Posterior vena cava (tissue), 2 donors: ENCODE measurements at regions of chr13 and their contacts with region 1.

Region 1: GRCh38 chr13:98509271-98510155 is 67.4 kb downstream of the STK24 start:
- DNase-seq: peak; percentile 92

Region 2: GRCh38 chr13:97858161-97858560 is 651.4 kb before region 1 on chr13:
- intact Hi-C with region 1: no loop called
- DNase-seq: no peak

Region 3: GRCh38 chr13:98327371-98328270 is 181.9 kb before region 1 on chr13:
- intact Hi-C with region 1: no loop called
- DNase-seq: no peak

Region 4: DNA sequence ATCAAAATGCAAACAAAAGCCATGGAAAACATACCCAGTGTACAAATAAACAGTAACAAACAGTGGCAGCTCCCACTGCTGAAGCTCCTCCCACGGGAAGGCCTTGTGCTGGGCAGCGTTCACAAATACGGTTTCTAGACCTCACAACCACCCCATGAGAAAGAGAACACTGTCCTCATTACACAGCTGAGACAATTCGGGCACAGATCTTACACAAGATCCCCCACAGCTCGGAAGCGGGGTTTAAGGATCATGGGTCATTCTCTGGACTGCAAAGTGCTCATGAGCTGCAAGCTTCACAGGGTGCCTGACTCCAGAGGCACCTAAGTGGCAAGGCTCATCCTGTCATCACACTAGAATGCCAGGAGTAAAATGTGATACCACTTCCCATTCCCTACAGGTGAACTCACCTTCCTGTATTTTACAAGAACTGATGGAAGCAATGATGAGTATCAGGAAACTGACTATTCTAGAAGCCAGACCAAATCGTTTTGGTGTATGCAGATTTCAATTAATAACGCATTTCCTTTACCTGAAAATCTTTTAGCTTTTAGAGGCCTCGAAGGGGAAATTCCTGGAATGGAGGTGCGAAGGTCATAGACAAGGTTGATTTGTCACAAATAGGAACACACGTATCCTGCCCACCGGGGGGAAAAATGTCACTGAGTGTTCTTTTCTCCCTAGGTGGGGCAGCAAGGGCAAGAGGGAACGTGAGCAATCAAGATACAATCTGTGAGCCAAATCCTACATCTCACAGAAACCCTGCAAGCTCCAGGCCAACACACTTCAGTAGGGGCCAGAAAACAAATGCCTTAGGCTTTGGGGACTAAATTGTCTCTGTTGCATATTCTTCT is 26.2 kb after region 1 on chr13:
- intact Hi-C with region 1: loop called in 1 of 2 experiments (anchors 1 kb)
- DNase-seq: no peak

Region 5: DNA sequence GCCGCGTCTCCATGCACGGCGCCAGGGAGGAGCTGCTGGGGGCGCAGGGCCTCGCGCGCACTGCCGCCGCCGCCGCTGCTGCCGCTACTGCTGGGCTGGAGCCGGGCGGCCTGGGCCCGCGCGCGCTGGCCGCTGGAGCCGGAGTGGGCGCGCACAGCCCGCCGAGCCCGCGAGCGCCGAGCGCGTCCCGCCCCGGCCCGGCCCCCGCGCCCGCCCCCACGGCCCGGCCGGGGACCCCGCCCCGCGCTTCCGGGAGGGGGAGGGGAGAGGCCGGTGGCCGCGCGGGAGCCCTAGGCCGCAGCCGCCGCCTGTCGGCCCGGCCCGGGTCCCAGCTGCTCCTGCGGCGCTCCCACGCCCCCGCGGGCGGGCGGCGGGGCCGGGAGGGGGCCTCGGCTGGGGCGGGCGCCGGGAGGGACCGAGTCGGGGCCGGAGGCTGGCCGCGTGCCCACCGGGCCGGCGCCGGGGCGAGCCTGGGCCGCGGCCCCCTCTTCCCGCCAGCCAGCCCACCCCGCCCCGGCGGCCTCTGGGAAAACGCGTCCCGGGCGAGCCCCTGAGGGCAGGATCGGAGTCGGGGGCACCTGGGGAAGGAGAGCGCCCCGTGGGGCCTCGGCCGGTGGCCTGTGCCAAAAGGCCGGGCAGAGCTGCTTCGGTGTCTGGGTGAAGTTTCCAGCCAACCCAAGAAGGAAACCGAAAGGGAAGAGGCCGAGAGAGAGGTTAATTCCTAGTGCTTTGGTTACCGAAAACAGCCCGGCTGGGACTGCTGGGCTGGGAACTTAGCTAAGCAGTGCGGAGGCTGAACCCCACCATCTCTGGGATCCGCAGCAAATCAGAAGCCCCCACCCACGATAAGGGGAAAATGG is 67.7 kb after region 1 on chr13 and contains the start of gene STK24:
- intact Hi-C with region 1: loop called in 1 of 2 experiments (anchors 10 kb)
- DNase-seq: peak; percentile 91
- total RNA-seq, gene STK24: 57.3 to 62.6 TPM